Psoas muscle (tissue), 8 donors: ENCODE measurements at regions of chr4 and their contacts with region 1.

Region 1: DNA sequence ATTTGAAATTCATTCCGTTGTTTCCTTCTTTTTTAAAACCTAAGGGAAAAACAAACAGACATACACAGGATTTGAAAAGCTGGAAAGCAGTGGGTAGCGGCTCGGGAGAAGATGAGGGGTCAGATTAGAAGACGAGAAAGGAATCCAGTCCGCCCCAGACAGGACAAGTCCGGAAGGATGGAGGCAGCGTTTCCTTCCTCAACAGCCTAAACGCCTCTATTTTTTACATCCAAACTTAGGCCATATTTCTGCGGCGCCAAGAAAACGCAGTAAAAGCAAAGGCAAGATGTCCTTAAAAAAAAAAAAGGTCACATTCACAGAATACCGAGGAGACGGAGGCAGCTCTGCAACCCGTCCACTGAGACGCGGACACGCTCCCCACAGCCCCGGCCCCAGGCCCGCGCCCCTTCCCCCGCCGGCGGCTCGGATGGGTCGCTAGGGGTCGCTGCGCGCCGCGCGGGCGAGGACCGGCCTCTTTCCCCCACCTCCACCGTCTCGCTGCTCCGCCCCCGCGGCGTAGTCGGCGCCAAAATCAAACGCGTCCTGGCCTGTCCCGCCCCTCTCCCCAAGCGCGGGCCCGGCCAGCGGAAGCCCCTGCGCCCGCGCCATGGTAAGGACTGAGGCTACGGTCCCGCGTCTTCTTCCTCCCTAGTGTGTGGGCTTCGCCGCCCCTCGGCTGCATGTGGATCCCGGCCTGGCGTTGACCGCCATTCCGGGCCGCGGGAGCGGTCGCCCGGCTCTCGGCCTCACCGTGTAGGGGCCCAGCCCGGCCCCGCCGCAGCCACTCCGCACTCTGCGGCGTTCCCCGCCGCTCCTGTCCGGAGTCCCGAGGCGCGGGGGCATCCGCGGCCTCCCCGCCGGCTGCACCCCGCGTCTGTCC is at the start of gene MND1:
- DNase-seq: peak; percentile 83 to 92
- ATAC-seq: peak; percentile 95 to 98 (median 97)
- H3K4me3 ChIP-seq: peak within 1 kb of the TSS; percentile 85
- H3K27ac ChIP-seq: peak within 1 kb of the TSS; percentile 28
- H3K4me1 ChIP-seq: peaks cover 8% of the 10 kb centered on the region
- H3K27me3 ChIP-seq: no peaks in the 10 kb centered on the region
- CTCF ChIP-seq: peak; percentile 98
- total RNA-seq, gene MND1: 1.4 TPM in 1 of 4 donors, not detected in the others

Region 2: GRCh38 chr4:153432968-153433753 is 88.8 kb after region 1 on chr4:
- intact Hi-C with region 1: loop called (anchors 5 to 10 kb)
- DNase-seq: peak; percentile 40 to 59
- ATAC-seq: peak; percentile 80 to 94 (median 87)
- H3K4me3 ChIP-seq: peak overlapping the region; percentile 44
- H3K27ac ChIP-seq: peak overlapping the region; percentile 61
- H3K4me1 ChIP-seq: no peaks in the 10 kb centered on the region
- H3K27me3 ChIP-seq: no peaks in the 10 kb centered on the region
- CTCF ChIP-seq: peak; percentile 59

Region 3: GRCh38 chr4:153466081-153466948 is 121.9 kb after region 1 on chr4 and contains the start of gene TMEM131L:
- intact Hi-C with region 1: loop called in 1 of 2 experiments (anchors 5 kb)
- DNase-seq: peak; percentile 80 to 85
- ATAC-seq: peak; percentile 79 to 84 (median 82)
- H3K4me3 ChIP-seq: peak within 1 kb of the TSS; percentile 96
- H3K27ac ChIP-seq: peak within 1 kb of the TSS; percentile 98
- H3K4me1 ChIP-seq: peaks cover 59% of the 10 kb centered on the region
- H3K27me3 ChIP-seq: no peaks in the 10 kb centered on the region
- CTCF ChIP-seq: no peak
- total RNA-seq, gene TMEM131L: 6.9 to 21.2 (median 11.5) TPM

Region 4: GRCh38 chr4:153573881-153574802 is 229.8 kb after region 1 on chr4:
- intact Hi-C with region 1: loop called (anchors 1 to 2 kb)
- DNase-seq: peak; percentile 37 to 74
- ATAC-seq: peak; percentile 80 to 91 (median 88)
- H3K4me3 ChIP-seq: no peak overlapping the region
- H3K27ac ChIP-seq: peak overlapping the region; percentile 92
- H3K4me1 ChIP-seq: peaks cover 33% of the 10 kb centered on the region
- H3K27me3 ChIP-seq: no peaks in the 10 kb centered on the region
- CTCF ChIP-seq: peak; percentile 76

Region 5: GRCh38 chr4:153649572-153649991 is 305.2 kb after region 1 on chr4:
- intact Hi-C with region 1: loop called (anchors 5 kb)
- DNase-seq: no peak
- ATAC-seq: peak in 1 of 4 donors; percentile 47
- H3K4me3 ChIP-seq: no peak overlapping the region
- H3K27ac ChIP-seq: no peak overlapping the region
- H3K4me1 ChIP-seq: no peaks in the 10 kb centered on the region
- H3K27me3 ChIP-seq: no peaks in the 10 kb centered on the region
- CTCF ChIP-seq: peak; percentile 36

Region 6: GRCh38 chr4:153750197-153750817 is 405.9 kb after region 1 on chr4:
- intact Hi-C with region 1: loop called in 1 of 2 experiments (anchors 1 kb)
- DNase-seq: no peak
- ATAC-seq: peak; percentile 44 to 70 (median 58)
- H3K4me3 ChIP-seq: no peak overlapping the region
- H3K27ac ChIP-seq: no peak overlapping the region
- H3K4me1 ChIP-seq: no peaks in the 10 kb centered on the region
- H3K27me3 ChIP-seq: no peaks in the 10 kb centered on the region
- CTCF ChIP-seq: peak; percentile 48